Sigmoid colon (tissue), 7 donors: ENCODE measurements at regions of chr16 and their contacts with region 1.

Region 1: DNA sequence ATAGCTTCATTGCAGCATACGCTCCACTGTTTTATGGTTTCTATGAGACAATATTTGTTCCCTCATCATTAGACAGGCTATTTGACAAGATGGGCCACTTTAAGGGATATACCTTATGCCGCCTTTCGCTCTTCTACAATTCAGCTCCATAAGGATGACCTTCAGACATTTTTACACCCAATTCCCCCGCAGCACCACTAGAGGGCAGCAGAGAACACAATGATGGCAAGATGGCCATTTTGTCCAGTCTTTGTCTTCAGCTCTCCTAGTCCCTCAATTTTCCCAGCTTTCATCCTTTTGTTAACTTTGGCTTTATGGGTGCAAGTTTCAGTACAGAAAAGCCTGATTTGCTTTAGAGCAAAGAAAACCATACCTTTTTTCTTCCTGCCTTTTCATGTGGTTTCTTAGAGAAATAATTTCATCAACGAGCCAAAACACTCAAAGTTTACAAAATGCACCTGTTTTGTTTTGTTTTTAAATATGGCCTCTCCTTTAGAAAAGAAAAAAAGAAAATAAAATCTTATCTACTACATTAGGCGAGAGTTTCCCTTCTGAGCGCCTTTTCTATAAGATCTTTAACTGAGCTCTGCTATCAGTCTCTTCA is 355.3 kb downstream of the TOX3 start:
- DNase-seq: peak; percentile 70
- H3K4me3 ChIP-seq: no peak overlapping the region
- H3K27ac ChIP-seq: no peak overlapping the region
- H3K4me1 ChIP-seq: no peaks in the 10 kb centered on the region
- H3K27me3 ChIP-seq: no peaks in the 10 kb centered on the region
- CTCF ChIP-seq: peak; percentile 68 to 91 (median 88)
- EP300 ChIP-seq: no peak
- POLR2A ChIP-seq: no peak

Region 2: GRCh38 chr16:52212841-52213240 is 21.2 kb after region 1 on chr16:
- intact Hi-C with region 1: no loop called
- DNase-seq: no peak
- H3K4me3 ChIP-seq: no peak overlapping the region
- H3K27ac ChIP-seq: no peak overlapping the region
- H3K4me1 ChIP-seq: no peaks in the 10 kb centered on the region
- H3K27me3 ChIP-seq: no peaks in the 10 kb centered on the region
- CTCF ChIP-seq: no peak
- EP300 ChIP-seq: no peak
- POLR2A ChIP-seq: no peak

Region 3: GRCh38 chr16:52237843-52238242 is 46.2 kb after region 1 on chr16:
- intact Hi-C with region 1: no loop called
- DNase-seq: no peak
- H3K4me3 ChIP-seq: no peak overlapping the region
- H3K27ac ChIP-seq: no peak overlapping the region
- H3K4me1 ChIP-seq: no peaks in the 10 kb centered on the region
- H3K27me3 ChIP-seq: no peaks in the 10 kb centered on the region
- CTCF ChIP-seq: no peak
- EP300 ChIP-seq: no peak
- POLR2A ChIP-seq: no peak

Region 4: GRCh38 chr16:52912565-52913173 is 721.0 kb after region 1 on chr16:
- intact Hi-C with region 1: loop called (anchors 1 kb)
- DNase-seq: no peak
- H3K4me3 ChIP-seq: no peak overlapping the region
- H3K27ac ChIP-seq: no peak overlapping the region
- H3K4me1 ChIP-seq: no peaks in the 10 kb centered on the region
- H3K27me3 ChIP-seq: no peaks in the 10 kb centered on the region
- CTCF ChIP-seq: peak in 3 of 4 experiments; percentile 41 to 68 (median 65)
- EP300 ChIP-seq: no peak
- POLR2A ChIP-seq: no peak

Region 5: GRCh38 chr16:53022374-53022773 is 830.7 kb after region 1 on chr16:
- intact Hi-C with region 1: loop called (anchors 2 kb)
- DNase-seq: no peak
- H3K4me3 ChIP-seq: no peak overlapping the region
- H3K27ac ChIP-seq: no peak overlapping the region
- H3K4me1 ChIP-seq: no peaks in the 10 kb centered on the region
- H3K27me3 ChIP-seq: no peaks in the 10 kb centered on the region
- CTCF ChIP-seq: peak; percentile 17 to 39 (median 26)
- EP300 ChIP-seq: no peak
- POLR2A ChIP-seq: no peak